ENCODE measurements at regions of chr11 and their contacts with region 1.

Region 1: DNA sequence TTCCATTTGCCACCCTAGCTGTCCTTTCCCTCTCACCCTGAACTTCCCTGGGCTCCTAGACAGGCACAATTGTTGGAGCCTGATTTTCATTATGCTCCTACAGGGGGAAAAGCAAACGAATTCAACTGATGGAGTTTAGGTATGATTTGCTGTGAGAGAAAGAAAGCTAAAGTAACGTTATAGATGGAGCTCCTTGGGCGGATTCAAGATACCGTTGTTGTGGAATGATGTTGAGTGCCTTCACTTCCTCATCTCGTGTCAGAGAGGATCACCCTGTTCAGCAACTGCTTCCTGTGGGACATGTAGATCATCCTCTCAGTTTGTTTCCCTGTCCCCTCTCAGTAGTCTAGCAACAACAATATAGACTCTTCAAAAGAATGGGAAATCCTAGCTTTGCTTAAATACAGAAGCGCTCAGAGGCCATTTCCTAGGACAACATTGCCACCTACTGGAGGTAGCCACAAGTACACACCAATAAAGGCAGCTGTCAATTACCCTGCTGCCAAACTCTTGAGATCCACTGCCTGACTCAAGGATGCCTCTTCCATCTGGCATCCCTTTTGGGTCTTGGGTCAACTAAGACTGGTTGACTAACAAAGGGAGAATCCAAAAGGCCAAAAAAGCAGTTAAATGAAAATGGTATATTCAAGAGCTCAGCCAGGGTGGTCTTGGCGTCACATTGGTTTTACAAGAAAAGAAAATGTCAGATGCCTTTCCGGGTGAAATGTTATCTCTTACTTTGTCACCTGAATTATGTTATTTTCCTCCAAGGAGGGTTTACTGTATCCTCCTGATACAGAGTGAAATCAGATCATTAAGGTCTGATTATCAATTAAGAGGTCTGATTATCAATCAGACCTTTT is 13.5 kb upstream of the DTX4 start:
- DNase-seq: peak; percentile 54
- ATAC-seq: peak; percentile 96
- H3K4me3 Mint-ChIP-seq: no peak overlapping the region
- H3K27ac Mint-ChIP-seq: no peak overlapping the region
- H3K4me1 Mint-ChIP-seq: peaks cover 8% of the 10 kb centered on the region
- H3K27me3 Mint-ChIP-seq: no peaks in the 10 kb centered on the region
- CTCF ChIP-seq: peak; percentile 54

Region 2: GRCh38 chr11:58567889-58568512 is 590.4 kb before region 1 on chr11:
- CTCF ChIA-PET with region 1: interaction called, 17 read pairs
- POLR2A ChIA-PET with region 1: interaction called, 4 read pairs
- DNase-seq: peak; percentile 69
- ATAC-seq: peak; percentile 88
- H3K4me3 Mint-ChIP-seq: no peak overlapping the region
- H3K27ac Mint-ChIP-seq: no peak overlapping the region
- H3K4me1 Mint-ChIP-seq: no peaks in the 10 kb centered on the region
- H3K27me3 Mint-ChIP-seq: no peaks in the 10 kb centered on the region
- CTCF ChIP-seq: peak; percentile 73

Region 3: GRCh38 chr11:58905721-58906477 is 252.5 kb before region 1 on chr11:
- CTCF ChIA-PET with region 1: interaction called, 25 read pairs
- POLR2A ChIA-PET with region 1: interaction called, 3 read pairs
- DNase-seq: peak; percentile 85
- ATAC-seq: peak; percentile 80
- H3K4me3 Mint-ChIP-seq: peak overlapping the region; percentile 65
- H3K27ac Mint-ChIP-seq: no peak overlapping the region
- H3K4me1 Mint-ChIP-seq: peaks cover 31% of the 10 kb centered on the region
- H3K27me3 Mint-ChIP-seq: peaks cover 79% of the 10 kb centered on the region
- CTCF ChIP-seq: no peak; the same call in 1 of the 2 replicates

Region 4: GRCh38 chr11:59062602-59063529 is 95.6 kb before region 1 on chr11:
- CTCF ChIA-PET with region 1: interaction called, 45 read pairs
- POLR2A ChIA-PET with region 1: no interaction called
- DNase-seq: no peak
- ATAC-seq: no peak
- H3K4me3 Mint-ChIP-seq: no peak overlapping the region
- H3K27ac Mint-ChIP-seq: no peak overlapping the region
- H3K4me1 Mint-ChIP-seq: peaks cover 11% of the 10 kb centered on the region
- H3K27me3 Mint-ChIP-seq: peaks cover 34% of the 10 kb centered on the region
- CTCF ChIP-seq: no peak

Region 5: DNA sequence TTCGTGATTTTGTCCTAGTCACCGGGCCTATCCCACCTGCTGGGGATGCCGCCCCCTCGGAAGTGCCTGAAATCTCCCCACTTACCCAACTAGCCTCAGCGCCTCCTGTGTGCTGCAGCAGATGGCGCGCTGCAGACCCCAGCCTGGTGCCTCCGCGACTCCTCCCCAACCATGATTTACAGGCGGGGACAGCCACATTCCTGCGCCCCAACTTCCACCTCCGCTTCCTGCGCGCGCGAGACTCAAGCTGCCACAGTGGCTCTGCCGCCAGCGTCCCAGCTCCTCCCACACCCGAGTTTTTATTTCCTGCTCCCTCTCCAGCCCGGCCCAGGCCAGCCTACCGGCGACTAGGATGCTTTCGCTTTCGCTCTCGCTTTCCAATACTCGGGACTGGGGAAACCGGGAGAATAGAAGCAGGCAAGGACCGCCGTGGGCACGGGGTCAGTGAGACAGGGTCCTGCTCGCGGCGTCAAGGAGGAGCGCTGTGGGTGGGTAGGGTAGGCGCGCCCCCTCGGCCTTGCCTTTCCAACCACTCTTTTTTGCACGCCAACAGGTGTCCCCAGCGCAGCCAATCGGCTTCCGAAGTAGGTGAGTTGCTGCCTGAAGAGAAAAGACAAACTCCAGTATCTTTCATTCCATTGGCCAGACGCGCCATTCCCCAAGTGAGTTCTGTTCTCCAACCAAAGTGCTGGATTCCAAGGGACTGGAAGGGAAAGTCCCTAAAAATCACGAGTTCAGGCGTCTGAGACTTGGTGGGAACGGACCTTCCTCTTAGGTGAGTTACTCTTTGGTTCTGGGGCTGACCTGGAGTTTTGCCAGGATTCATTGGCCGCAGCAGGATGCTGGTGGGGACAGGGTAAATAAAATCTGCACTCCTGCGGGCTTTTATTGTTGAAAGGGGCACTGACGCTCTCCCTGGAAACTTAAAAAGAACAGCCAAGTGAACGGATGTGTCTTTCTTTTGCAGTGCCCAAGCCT is 15.6 kb before region 1 on chr11 and contains the start of gene FAM111A:
- CTCF ChIA-PET with region 1: interaction called, 46 read pairs
- POLR2A ChIA-PET with region 1: interaction called, 4 read pairs
- DNase-seq: peak; percentile 81
- ATAC-seq: peak; percentile 80
- H3K4me3 Mint-ChIP-seq: peak within 1 kb of the TSS; percentile 86
- H3K27ac Mint-ChIP-seq: peak within 1 kb of the TSS; percentile 96
- H3K4me1 Mint-ChIP-seq: peaks cover 42% of the 10 kb centered on the region
- H3K27me3 Mint-ChIP-seq: peaks cover 13% of the 10 kb centered on the region
- CTCF ChIP-seq: no peak
- total RNA-seq, gene FAM111A: 18.8 to 24.4 TPM (median 22.0 TPM) in 3 replicates

Region 6: GRCh38 chr11:59186130-59186594 is 27.7 kb after region 1 on chr11:
- CTCF ChIA-PET with region 1: interaction called, 34 read pairs
- POLR2A ChIA-PET with region 1: no interaction called
- DNase-seq: peak; percentile 68
- ATAC-seq: peak; percentile 78
- H3K4me3 Mint-ChIP-seq: no peak overlapping the region
- H3K27ac Mint-ChIP-seq: no peak overlapping the region
- H3K4me1 Mint-ChIP-seq: peaks cover 16% of the 10 kb centered on the region
- H3K27me3 Mint-ChIP-seq: no peaks in the 10 kb centered on the region
- CTCF ChIP-seq: peak; percentile 65

Region 7: DNA sequence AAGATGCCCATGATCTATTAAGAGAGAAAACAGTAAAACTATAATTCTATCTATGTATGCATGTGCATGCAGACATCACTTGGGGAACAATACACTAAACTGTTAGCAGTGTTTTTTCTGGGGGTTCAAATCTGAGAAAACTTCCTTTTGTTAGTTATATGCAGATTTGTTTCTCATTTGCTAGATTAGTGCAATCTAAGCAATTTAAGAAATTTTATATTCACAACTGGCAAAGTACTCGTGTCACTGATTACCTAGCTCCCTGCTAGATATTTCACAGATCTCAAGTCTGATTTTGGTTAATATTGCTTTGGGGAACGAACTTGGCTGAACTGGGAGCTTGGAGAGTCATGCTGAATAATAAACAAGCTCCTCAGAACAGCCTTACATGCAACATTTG is 472.1 kb after region 1 on chr11:
- CTCF ChIA-PET with region 1: no interaction called
- POLR2A ChIA-PET with region 1: no interaction called
- DNase-seq: no peak
- ATAC-seq: no peak
- H3K4me3 Mint-ChIP-seq: no peak overlapping the region
- H3K27ac Mint-ChIP-seq: no peak overlapping the region
- H3K4me1 Mint-ChIP-seq: peaks cover 17% of the 10 kb centered on the region
- H3K27me3 Mint-ChIP-seq: no peaks in the 10 kb centered on the region
- CTCF ChIP-seq: no peak